Gastrocnemius medialis (tissue), 4 donors: ENCODE measurements at regions of chr3 and their contacts with region 1.

Region 1: GRCh38 chr3:179562591-179563270 is at the start of gene ACTL6A:
- DNase-seq: peak; percentile 100
- ATAC-seq: peak; percentile 95 to 98
- H3K4me3 ChIP-seq: peak within 1 kb of the TSS; percentile 75 to 97 (median 86)
- H3K27ac ChIP-seq: peak within 1 kb of the TSS; percentile 86 to 92 (median 88)
- H3K4me1 ChIP-seq: peaks cover 8 to 12% of the 10 kb centered on the region in 2 donors
- H3K27me3 ChIP-seq: no peaks in the 10 kb centered on the region
- CTCF ChIP-seq: no peak
- POLR2A ChIP-seq: peak; percentile 59 to 79
- total RNA-seq, gene ACTL6A: 12.1 to 27.8 (median 21.0) TPM

Region 2: GRCh38 chr3:179015551-179016020 is 547.1 kb before region 1 on chr3:
- in situ Hi-C with region 1: loop called in 2 of 4 experiments (anchors 25 kb)
- intact Hi-C with region 1: loop called (anchors 10 kb)
- DNase-seq: no peak
- ATAC-seq: peak; percentile 65 to 83
- H3K4me3 ChIP-seq: no peak overlapping the region
- H3K27ac ChIP-seq: no peak overlapping the region
- H3K4me1 ChIP-seq: peaks cover 0 to 10% of the 10 kb centered on the region in 2 donors
- H3K27me3 ChIP-seq: no peaks in the 10 kb centered on the region
- CTCF ChIP-seq: peak; percentile 62 to 82 (median 74)
- POLR2A ChIP-seq: no peak

Region 3: GRCh38 chr3:179322286-179323196 is 240.2 kb before region 1 on chr3 and contains the start of gene ZNF639:
- in situ Hi-C with region 1: loop called in 2 of 4 experiments (anchors 10 to 25 kb)
- intact Hi-C with region 1: loop called (anchors 2 kb)
- DNase-seq: peak; percentile 54 to 80
- ATAC-seq: peak; percentile 76 to 83
- H3K4me3 ChIP-seq: peak within 1 kb of the TSS; percentile 85 to 94 (median 92)
- H3K27ac ChIP-seq: peak within 1 kb of the TSS; percentile 89 to 96 (median 92)
- H3K4me1 ChIP-seq: peaks cover 23 to 28% of the 10 kb centered on the region in 2 donors
- H3K27me3 ChIP-seq: no peaks in the 10 kb centered on the region
- CTCF ChIP-seq: peak; percentile 74 to 93 (median 89)
- POLR2A ChIP-seq: peak; percentile 88 to 91
- total RNA-seq, gene ZNF639: 28.7 to 43.7 (median 39.7) TPM

Region 4: DNA sequence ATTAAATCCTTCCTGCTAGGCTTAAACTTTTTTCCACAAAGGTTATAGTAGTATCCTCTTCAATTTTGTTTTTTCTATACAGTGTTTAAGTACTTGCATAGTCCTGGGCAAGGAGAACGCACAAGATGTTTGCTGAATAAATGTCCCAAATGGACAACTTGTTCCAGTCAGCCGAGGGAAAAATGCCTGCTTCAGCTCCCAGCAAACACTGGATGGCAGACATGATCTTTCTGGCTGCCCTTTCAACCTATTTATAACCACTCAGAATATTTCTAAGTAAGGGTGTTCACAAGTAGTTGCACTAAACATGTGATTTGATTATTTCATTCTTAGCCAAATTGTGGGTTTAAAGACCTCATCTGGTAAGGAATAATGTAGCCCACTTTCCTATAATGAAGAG is 141.2 kb before region 1 on chr3:
- in situ Hi-C with region 1: loop called in 2 of 4 experiments (anchors 10 kb)
- intact Hi-C with region 1: loop called (anchors 2 kb)
- DNase-seq: no peak
- ATAC-seq: peak in 1 of 2 donors; percentile 61
- H3K4me3 ChIP-seq: no peak overlapping the region
- H3K27ac ChIP-seq: no peak overlapping the region
- H3K4me1 ChIP-seq: peaks cover 0 to 8% of the 10 kb centered on the region in 2 donors
- H3K27me3 ChIP-seq: no peaks in the 10 kb centered on the region
- CTCF ChIP-seq: peak in 2 of 5 experiments; percentile 39 to 47
- POLR2A ChIP-seq: no peak

Region 5: GRCh38 chr3:179604321-179605078 is 41.8 kb after region 1 on chr3 and contains the starts of genes MRPL47 and NDUFB5:
- in situ Hi-C with region 1: no loop called
- intact Hi-C with region 1: loop called (anchors 1 kb)
- DNase-seq: peak; percentile 93 to 94
- ATAC-seq: peak; percentile 100
- H3K4me3 ChIP-seq: peak within 1 kb of the TSS; percentile 84 to 94 (median 88)
- H3K27ac ChIP-seq: peak within 1 kb of the TSS; percentile 90 to 97 (median 92)
- H3K4me1 ChIP-seq: peaks cover 30 to 40% of the 10 kb centered on the region in 2 donors
- H3K27me3 ChIP-seq: no peaks in the 10 kb centered on the region
- CTCF ChIP-seq: no peak
- POLR2A ChIP-seq: peak; percentile 80 to 88
- total RNA-seq, gene MRPL47: 34.9 to 74.0 (median 41.2) TPM
- total RNA-seq, gene NDUFB5: 127 to 348 (median 179) TPM